ENCODE measurements at regions of chr3 and their contacts with region 1.

Region 1: GRCh38 chr3:62242831-62243509 is 130.4 kb downstream of the FEZF2 start:
- DNase-seq: peak; percentile 46
- ATAC-seq: peak; percentile 78
- H3K4me3 Mint-ChIP-seq: peak overlapping the region; percentile 13; the same call in 1 of the 2 replicates
- H3K27ac Mint-ChIP-seq: peak overlapping the region; percentile 24
- H3K4me1 Mint-ChIP-seq: peaks cover 68% of the 10 kb centered on the region
- H3K27me3 Mint-ChIP-seq: no peaks in the 10 kb centered on the region
- CTCF ChIP-seq: no peak

Region 2: DNA sequence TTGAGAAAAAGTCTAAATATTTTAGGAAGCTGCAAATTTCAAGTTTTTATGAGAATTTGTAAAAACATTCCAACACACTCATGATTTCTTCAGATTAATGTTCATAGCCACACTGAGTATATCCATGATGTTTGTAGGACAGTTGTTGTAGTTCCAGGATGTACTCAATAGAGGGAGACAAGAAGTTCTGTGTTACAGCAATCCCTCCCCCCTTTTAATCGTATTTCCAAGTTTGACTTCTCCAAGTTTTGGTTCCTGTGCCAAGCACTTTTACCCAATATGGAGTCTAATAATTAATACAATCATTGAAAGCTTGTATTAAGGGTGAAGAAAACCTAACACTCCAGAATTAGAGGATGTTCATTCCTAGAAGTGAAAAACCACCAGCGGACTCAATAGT is 13.1 kb before region 1 on chr3:
- CTCF ChIA-PET with region 1: interaction called, 16 read pairs
- POLR2A ChIA-PET with region 1: no interaction called
- DNase-seq: no peak
- ATAC-seq: no peak; the same call in 1 of the 2 replicates
- H3K4me3 Mint-ChIP-seq: no peak overlapping the region
- H3K27ac Mint-ChIP-seq: no peak overlapping the region
- H3K4me1 Mint-ChIP-seq: peaks cover 27% of the 10 kb centered on the region
- H3K27me3 Mint-ChIP-seq: no peaks in the 10 kb centered on the region
- CTCF ChIP-seq: 0 out of 2 replicates have a peak, but pooled peaks have one; percentile 33